Activated naive CD4-positive, alpha-beta T cell treated with anti-CD3 and anti-CD28 coated beads, Interleukin-2, amount 10 ng/mL, durations not matched to agents 7 days and 5 days (primary cell): ENCODE measurements at regions of chr20 and their contacts with region 1.

Region 1: GRCh38 chr20:956330-956951 is 40.3 kb upstream of the ANGPT4 start:
- DNase-seq: peak; percentile 80
- H3K4me3 Mint-ChIP-seq: no peak overlapping the region
- H3K27ac Mint-ChIP-seq: no peak overlapping the region
- H3K4me1 Mint-ChIP-seq: no peaks in the 10 kb centered on the region
- H3K27me3 Mint-ChIP-seq: peaks cover 69% of the 10 kb centered on the region

Region 2: GRCh38 chr20:539848-540247 is 416.6 kb before region 1 on chr20:
- CTCF ChIA-PET with region 1: no interaction called
- DNase-seq: no peak
- H3K4me3 Mint-ChIP-seq: no peak overlapping the region
- H3K27ac Mint-ChIP-seq: no peak overlapping the region
- H3K4me1 Mint-ChIP-seq: peaks cover 75% of the 10 kb centered on the region
- H3K27me3 Mint-ChIP-seq: no peaks in the 10 kb centered on the region

Region 3: DNA sequence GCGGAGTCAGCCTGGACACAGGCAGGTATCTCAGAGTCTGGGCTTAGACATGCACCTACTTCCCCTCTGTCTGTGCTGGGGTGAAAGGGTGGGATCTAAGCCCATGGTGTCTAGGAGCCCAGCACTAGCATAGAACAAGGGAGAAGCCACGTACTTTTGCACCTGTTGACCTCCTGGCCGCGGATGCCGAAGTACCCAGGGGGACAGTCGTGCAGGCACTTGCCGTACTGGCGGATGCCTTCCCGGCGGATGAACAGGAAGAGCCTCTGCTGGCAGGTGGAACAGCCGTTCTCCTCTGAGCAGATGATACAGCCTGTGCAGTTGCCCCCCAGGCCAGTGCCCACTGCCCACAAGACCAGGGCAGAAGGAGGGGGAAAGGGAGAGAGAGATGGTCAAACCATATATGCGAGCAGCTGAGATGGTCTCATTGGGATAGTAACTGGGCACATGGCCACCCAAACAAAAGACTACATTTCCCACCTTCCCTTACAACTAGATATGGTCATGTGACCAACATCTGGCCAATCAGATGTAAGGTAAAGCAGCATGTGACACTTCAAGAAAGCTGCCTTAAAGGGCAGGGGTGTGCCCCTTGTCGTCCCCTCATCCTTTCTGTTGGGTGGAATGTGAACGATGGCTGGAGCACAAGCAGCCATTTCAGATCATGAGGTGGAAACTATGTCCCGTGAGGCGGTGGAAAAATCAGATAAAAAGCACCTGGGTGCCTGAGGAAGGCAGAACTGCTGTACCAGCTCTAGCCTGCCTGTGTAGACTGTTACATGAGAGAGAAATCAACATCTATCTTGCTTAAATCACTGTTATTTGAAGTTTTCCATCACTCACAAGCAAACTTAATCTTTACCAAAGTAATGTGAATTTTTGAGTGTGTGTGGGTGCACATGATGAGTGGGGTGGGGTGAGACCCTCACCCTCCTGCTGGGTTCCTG is 11.6 kb after region 1 on chr20:
- CTCF ChIA-PET with region 1: interaction called, 16 read pairs
- DNase-seq: no peak
- H3K4me3 Mint-ChIP-seq: no peak overlapping the region
- H3K27ac Mint-ChIP-seq: no peak overlapping the region
- H3K4me1 Mint-ChIP-seq: no peaks in the 10 kb centered on the region
- H3K27me3 Mint-ChIP-seq: peaks cover 34% of the 10 kb centered on the region